ENCODE measurements at regions of chr10 and their contacts with region 1.

Region 1: DNA sequence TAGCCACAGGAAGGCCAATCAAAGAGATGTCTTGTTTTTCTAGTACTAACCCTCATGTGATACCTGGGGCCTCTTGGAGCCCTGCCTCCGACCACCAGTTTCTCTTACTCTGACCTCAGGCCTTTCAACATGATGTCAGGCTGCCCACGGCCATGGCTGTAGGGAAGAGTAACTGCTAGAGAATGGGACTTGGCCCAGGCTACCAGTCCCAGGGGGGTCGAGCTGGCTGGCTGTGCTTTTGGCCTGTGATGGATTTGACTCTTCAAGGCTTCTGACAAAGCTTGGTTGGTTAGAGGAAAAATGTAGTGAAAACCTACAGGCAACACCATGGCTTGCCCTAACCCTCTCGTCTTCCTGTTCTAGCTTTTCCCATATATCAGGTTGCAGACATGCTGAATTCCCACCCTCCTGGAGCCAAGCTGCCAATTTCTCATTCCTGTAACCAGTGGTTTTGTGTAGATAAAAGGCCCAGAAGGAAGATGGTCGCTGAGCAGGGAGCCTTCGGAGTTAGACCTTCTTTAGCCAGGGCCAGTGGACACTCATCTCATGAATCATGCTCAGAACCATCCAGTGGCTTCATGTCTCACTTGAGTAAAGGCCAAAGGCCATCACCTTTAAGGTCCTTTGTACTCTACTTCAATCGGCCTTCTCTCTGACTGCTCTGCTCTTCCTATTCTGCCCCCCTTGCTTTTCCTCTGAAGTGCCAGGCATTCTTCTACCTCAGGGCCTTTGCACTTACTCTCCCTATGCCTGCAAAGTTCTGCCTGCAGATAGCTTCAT is 19.7 kb downstream of the SUFU start:
- DNase-seq: peak; percentile 95
- H3K4me3 ChIP-seq: no peak overlapping the region
- CTCF ChIP-seq: no peak

Region 2: DNA sequence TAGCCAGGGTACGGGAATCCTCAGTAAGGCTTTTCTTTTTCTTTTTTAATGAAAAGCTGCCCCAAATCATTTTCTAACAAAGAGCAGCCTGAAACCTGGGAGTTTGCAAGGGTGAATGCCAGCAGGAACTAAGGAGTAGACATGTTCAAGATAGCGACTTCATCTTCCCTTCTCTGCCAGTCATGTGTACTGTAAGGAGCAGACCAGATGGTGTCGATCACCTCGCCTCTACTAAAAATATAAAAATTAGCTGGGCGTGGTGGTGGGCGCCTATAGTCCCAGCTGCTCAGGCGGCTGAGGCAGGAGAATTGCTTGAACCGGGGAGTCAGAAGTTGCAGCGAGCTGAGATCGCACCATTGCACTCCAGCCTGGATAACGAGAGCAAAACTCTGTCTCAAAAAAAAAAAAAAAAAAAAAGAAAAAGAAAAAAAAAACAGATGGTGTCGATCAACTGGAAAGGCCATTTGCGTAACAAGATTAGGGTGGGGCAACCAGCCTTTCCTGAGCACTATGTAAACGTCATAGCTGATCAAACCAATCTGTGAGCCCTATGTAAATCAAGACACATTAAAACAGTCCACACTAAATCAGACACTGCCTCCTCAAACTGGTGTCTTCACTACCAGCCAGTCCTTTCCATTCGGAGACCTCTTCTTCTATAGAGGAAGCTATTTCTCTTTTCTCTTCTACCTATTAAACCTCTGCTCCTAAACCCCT is 337.5 kb before region 1 on chr10:
- in situ Hi-C with region 1: no loop called
- DNase-seq: no peak
- H3K4me3 ChIP-seq: no peak overlapping the region
- CTCF ChIP-seq: no peak

Region 3: GRCh38 chr10:102555781-102556328 is 32.4 kb after region 1 on chr10:
- in situ Hi-C with region 1: no loop called
- DNase-seq: no peak
- H3K4me3 ChIP-seq: no peak overlapping the region
- CTCF ChIP-seq: no peak

Region 4: DNA sequence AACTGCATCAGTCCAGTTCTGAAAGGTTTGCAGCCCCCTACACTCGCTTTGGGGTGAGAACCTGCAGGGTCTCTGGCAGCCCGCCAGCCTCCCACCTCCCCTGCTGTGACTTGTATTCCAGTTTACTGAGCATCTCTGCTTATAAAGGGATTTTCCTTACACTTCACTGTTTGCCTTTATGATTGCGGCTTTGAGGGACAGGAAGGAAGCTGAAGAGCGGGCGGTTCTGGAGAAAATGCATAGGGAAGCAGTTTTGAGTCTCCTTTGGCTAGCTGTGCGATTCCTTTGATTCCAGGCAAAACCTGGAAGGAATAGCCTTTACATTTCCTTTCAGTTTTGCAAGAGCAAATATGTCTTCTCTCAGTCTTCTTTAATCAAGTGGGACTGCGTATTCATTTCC is 55.9 kb after region 1 on chr10:
- in situ Hi-C with region 1: loop called (anchors 5 kb)
- DNase-seq: no peak
- H3K4me3 ChIP-seq: no peak overlapping the region
- CTCF ChIP-seq: no peak

Region 5: DNA sequence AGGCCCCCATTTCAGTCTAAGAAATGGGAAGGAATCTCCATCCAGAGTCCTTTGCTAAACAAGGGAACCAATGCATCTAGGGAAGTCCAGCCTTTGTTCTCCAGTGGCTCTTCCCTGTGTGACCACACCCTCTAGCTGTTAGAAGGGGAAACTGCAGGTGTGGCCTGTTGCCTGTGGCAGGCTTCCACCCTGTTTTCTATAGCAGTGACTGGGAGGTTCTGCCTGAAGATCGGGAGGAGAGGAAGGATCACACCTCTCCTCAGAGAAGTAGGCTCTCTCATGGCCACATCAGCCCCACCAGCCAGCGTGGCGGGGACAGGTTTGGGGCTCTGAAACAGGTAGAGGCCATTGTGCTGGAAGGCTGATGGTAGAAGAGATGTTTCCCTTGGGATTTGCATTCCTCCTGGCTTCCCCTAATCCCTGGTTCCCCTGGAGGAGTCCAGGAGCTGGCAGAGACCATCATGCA is 73.1 kb after region 1 on chr10:
- in situ Hi-C with region 1: no loop called
- DNase-seq: peak; percentile 32
- H3K4me3 ChIP-seq: no peak overlapping the region
- CTCF ChIP-seq: peak; percentile 97

Measured in astrocyte of the cerebellum (primary cell).